Posterior vena cava (tissue), 2 donors: ENCODE measurements at regions of chr20 and their contacts with region 1.

Region 1: DNA sequence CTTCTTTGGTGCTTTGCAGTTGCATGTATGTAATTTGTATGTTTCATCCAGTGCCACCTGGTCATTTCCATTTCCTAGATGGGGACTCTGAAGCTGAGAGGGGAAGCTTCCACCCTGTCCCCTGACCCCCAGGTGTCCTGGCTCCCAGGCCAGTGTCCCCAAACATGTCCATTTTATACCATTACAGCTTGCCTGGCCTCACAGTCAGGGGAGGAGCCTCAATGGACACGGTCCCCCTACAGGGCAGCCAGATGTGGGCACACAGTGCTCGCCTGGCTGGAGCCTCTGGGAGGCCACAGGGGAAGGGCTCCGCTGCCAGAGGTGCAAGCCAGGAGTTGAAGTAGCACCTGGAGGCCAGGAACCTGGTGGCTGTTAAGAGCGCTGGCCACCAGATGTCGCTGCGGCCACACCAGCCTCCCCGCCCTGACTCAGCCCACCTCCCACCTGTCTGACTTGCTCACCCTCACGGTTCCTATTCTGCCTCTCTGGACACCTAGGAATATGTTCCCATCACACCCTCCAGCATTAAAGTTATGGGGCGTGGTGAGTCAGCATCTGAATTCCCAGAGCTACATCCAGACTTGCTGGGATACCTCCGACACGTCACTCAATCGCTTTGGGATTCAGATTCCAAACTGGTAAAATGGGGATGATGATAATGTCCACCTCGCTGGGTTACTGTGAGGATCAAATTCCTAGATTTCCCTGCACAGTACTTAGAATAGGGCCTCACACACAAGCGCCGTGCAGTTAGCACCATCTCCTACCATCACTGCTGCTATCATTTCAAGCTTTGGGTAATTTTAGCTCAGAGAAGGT is 107.4 kb downstream of the SULF2 start:
- DNase-seq: no peak

Region 2: GRCh38 chr20:47758517-47759348 is 80.9 kb after region 1 on chr20:
- intact Hi-C with region 1: loop called in 1 of 2 experiments (anchors 10 kb)
- DNase-seq: no peak

Region 3: GRCh38 chr20:48295445-48295963 is 617.7 kb after region 1 on chr20:
- intact Hi-C with region 1: loop called in 1 of 2 experiments (anchors 10 kb)
- DNase-seq: no peak

Region 4: DNA sequence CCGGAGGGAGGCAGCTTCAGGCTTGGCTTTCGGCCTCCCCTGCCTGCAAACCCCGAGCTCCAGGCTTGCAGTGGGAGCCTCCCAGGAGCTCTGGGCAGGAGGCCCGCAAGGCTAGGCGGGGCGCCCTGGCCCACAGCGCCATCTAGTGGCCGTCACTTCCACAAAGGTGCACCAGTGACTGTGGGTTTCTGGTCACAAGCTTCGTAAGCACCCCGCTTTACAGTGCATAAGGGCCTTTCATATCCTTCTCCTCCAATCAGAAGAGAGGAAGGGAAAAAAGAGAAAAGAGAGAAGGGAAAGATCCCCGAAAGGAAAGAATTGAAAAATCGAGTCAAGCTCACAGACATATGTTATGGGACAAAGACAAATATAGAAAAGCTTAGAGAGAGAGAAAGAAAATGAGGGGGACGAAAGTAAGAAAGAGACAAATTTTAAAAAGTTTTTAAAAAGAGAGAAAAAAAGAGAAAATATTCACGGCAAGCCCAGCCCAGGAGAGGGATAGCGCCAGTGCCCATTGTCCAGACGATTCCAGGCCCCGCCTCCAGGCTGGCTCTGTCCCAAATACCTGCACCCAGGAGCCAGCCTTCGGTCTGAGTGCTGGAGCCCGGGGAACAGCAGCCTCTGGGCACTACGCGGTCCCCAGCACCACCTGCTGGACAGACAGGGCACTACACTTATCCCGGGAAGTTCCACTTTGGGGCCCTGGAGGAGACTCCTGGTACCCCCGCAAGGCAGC is 942.8 kb after region 1 on chr20:
- intact Hi-C with region 1: loop called in 1 of 2 experiments (anchors 5 kb)
- DNase-seq: peak; percentile 95